ENCODE measurements at regions of chr14 and their contacts with region 1.

Region 1: GRCh38 chr14:75560962-75561432 is 17.4 kb upstream of the FLVCR2 start:
- DNase-seq: peak; percentile 63
- ATAC-seq: peak; percentile 99
- H3K4me3 ChIP-seq: no peak overlapping the region
- H3K27ac ChIP-seq: no peak overlapping the region
- H3K4me1 ChIP-seq: peaks cover 8 to 14% of the 10 kb centered on the region in 2 experiments; a peak in 3 of 4 replicates
- H3K27me3 ChIP-seq: no peaks in the 10 kb centered on the region
- CTCF ChIP-seq: peak; percentile 78 to 89 (median 89)
- POLR2A ChIP-seq: no peak
- RAD21 ChIP-seq: peak; percentile 87

Region 2: DNA sequence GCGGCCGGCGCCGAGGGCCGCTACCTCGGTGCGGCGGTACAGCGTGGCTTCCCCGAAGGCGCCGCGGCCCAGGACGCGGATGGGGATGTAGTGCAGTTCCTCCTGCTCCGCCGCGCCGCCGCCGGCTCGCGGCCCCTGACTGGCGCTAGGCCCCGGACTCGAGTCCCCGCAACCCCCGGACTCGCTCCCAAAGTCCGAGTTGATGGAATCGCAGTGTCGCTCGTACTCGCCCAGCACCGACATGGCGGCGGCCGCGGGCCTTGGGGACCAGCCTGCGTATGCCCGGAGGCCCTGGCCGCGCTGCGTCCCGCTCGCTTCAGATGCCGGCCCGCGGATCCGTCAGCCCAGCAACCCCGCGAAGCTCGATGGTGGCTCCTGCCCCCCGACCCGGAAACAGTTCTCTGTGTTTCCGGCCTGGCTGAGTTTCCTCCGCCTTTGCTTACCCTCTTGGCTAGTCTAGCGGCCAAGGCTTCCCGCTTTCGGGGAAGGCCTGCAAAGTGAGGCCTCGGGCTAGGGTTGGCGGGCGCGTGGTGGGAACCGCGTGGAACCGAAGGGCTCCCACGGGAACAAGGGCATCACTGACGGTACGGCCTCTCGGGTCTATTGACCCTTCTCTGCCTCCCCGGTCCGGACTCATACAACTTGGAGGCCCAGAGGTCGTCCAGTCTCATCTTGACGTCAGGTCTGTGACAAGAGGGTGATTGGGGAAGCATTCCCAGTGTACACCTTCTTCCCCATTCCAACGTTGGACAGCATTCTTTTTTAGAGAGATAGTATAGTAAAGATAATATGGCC is 434.1 kb before region 1 on chr14 and contains the start of gene NEK9:
- CTCF ChIA-PET with region 1: no interaction called
- POLR2A ChIA-PET with region 1: no interaction called
- RAD21 ChIA-PET with region 1: no interaction called
- intact Hi-C with region 1: loop called (anchors 5 kb)
- DNase-seq: peak; percentile 83
- ATAC-seq: peak; percentile 89
- H3K4me3 ChIP-seq: peak within 1 kb of the TSS; percentile 78 to 86
- H3K27ac ChIP-seq: peak within 1 kb of the TSS; percentile 94
- H3K4me1 ChIP-seq: peaks cover 33 to 43% of the 10 kb centered on the region in 2 experiments
- H3K27me3 ChIP-seq: no peaks in the 10 kb centered on the region
- CTCF ChIP-seq: no peak
- POLR2A ChIP-seq: peak; percentile 67
- RAD21 ChIP-seq: 0 out of 2 replicates have a peak, but pooled peaks have one; percentile 2
- total RNA-seq, gene NEK9: 64.4 TPM

Region 3: GRCh38 chr14:75604856-75605851 is 44.2 kb after region 1 on chr14:
- CTCF ChIA-PET with region 1: no interaction called
- POLR2A ChIA-PET with region 1: no interaction called
- RAD21 ChIA-PET with region 1: no interaction called
- intact Hi-C with region 1: no loop called
- DNase-seq: no peak
- ATAC-seq: no peak
- H3K4me3 ChIP-seq: no peak overlapping the region
- H3K27ac ChIP-seq: no peak overlapping the region
- H3K4me1 ChIP-seq: peaks cover 0 to 3% of the 10 kb centered on the region in 2 experiments; a peak in 1 of 4 replicates
- H3K27me3 ChIP-seq: 0 out of 2 replicates have a peak, but pooled peaks cover 6% of the 10 kb centered on the region
- CTCF ChIP-seq: no peak
- POLR2A ChIP-seq: no peak
- RAD21 ChIP-seq: no peak

Measured in HCT116 (cell line).